IMR-90 (cell line): ENCODE measurements at regions of chr17 and their contacts with region 1.

Region 1: DNA sequence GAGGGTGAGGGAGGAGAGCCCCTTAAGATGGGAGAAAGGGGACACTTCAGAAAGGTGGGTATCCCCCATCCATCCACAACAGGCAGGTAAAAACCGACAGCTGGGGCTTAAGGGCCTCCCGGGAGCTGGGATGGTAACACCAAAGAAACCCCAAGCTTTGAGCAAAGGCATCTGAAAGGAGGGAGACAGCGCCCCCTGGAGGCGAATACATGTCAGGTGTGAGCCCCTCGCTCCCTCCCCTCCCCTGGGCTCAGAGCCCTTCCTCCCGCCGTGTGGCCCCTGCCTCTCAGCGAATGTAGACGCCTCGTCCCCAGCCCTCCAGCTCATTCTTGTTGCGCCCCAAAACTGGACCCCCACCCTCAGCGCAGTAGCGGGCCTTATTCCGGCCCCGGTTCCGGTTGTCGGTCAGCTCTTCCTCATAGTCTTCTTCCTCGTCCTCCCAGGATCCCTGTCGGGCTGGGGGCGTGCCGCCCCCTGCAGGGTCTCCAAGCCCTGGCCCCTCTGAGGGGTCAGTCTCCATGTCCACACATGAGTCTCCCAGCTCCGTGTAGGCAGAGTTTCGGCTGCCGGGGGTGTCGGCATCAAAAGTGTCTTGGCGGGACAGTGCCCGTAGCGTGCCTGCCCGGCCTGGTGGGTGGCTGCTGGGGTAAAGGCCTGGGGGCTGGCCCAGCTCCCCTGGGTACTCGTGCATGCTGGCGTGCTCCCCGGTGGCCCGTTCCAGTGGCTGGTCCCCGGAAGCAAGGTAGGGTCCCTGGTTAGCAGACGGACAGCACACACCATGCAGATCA is 9.1 kb upstream of the ARL5C start:
- DNase-seq: peak; percentile 60
- ATAC-seq: peak; percentile 71
- H3K4me3 ChIP-seq: no peak overlapping the region
- H3K27ac ChIP-seq: no peak overlapping the region
- H3K4me1 ChIP-seq: no peaks in the 10 kb centered on the region
- H3K27me3 ChIP-seq: no peaks in the 10 kb centered on the region; the same call in 1 of the 2 replicates
- CTCF ChIP-seq: peak; percentile 69
- POLR2A ChIP-seq: no peak
- RAD21 ChIP-seq: peak; percentile 63

Region 2: DNA sequence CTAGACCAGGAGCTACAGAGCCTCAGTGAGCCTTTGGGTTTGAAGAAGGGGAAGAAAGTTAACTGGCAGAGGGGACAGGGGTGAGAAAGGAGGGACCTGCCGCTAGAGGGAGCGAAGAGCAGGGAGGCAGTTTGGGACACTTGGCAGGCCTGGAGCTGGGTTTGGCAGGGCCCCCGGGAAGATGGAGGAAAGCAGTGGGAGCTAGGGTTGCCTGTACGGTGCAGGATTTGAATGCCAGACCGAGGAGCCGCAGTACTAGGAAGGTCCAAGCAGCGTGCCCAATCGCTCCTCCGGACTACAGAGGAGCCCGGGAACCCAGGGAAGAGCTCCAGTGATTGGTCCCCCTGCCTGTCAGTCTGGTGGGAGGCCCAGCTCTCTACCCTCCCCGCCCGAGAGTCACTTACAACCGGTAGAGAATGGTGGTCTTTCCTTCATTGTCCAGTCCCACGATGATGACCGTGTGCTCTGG is 10.4 kb before region 1 on chr17:
- CTCF ChIA-PET with region 1: interaction called, 19 read pairs
- POLR2A ChIA-PET with region 1: interaction called, 3 read pairs
- dilution Hi-C with region 1: no loop called
- in situ Hi-C with region 1: no loop called
- intact Hi-C with region 1: no loop called
- DNase-seq: peak; percentile 89
- ATAC-seq: peak; percentile 96
- H3K4me3 ChIP-seq: peak overlapping the region; percentile 55
- H3K27ac ChIP-seq: no peak overlapping the region
- H3K4me1 ChIP-seq: peaks cover 5% of the 10 kb centered on the region; the same call in 1 of the 2 replicates
- H3K27me3 ChIP-seq: peaks cover 35% of the 10 kb centered on the region
- CTCF ChIP-seq: peak; percentile 86
- POLR2A ChIP-seq: no peak
- RAD21 ChIP-seq: peak; percentile 59